Endothelial cell of umbilical vein (primary cell): ENCODE measurements at regions of chr4 and their contacts with region 1.

Region 1: DNA sequence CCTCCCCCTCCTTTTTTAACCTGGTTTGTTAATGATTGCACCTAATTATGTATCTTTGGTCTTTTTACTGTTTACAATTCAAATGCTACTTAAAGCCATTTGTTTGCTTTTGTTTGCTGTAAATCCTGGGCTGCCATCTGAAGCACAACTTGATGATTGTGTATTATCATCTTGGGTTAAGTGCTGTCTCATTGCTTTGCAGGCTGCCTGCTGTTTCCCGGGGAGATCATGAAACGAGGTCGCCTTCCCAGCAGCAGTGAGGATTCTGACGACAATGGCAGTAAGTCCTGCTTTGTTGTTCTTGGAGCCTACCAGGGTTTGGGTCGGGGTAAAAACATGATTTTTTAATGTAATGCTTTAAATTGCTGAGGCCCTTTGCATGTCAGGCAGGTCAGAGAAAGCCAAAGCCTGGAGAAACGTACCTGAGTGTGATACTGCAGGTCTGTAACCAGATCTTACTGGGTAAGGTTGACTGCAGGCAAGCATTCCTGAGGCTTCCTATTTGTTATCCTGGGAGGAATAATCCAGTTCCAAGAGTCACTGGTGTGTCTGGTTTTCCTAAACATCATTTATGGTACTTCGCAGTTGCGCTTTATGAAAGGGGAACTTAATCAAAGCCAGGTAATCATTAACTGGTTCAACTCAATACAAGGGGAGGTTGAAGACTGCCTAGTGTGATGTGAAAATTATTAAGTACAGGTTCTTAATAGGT is 22.2 kb downstream of the JADE1 start:
- DNase-seq: no peak
- H3K4me3 ChIP-seq: no peak overlapping the region
- H3K27ac ChIP-seq: no peak overlapping the region
- H3K4me1 ChIP-seq: peaks cover 14% of the 10 kb centered on the region
- H3K27me3 ChIP-seq: no peaks in the 10 kb centered on the region
- CTCF ChIP-seq: no peak
- POLR2A ChIP-seq: no peak

Region 2: DNA sequence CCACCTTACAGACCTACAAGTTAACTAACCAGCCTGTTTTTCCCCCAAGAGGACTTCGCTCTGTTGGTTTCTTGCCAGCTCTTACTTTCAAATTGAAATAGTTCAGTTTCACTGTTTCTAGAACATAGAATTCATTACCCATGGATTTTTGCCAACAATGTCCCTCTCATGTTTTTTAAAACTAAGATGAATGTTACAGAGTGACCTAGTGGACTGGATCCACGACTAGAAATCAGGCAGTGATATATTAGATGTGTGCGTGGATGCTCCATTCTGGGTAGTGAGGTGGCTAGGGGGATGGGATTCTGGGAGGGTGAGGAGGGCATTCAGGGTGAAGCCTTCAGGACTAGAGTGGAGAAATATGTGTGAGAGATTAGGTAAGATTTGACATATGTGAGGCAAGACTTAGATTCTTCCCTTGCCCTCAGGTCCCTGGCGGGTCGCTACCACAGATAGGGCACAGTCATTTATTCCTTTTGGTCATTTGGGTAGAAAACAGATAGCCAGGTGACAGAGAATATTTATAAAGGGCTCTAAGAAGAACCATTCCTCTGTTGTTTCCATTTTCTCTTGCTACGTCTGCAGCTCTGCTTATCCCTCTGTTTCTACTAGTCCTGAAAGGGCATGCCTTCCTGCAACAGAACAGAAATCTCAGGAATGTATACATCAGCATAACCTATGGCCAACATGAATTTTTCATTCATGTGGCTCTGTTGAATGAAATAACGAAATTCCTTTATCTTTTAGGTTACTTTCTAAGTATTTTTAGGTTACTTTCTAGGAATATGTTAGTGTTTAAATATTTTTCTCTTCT is 37.6 kb before region 1 on chr4:
- CTCF ChIA-PET with region 1: no interaction called
- POLR2A ChIA-PET with region 1: no interaction called
- dilution Hi-C with region 1: no loop called
- intact Hi-C with region 1: no loop called
- DNase-seq: no peak
- H3K4me3 ChIP-seq: no peak overlapping the region
- H3K27ac ChIP-seq: no peak overlapping the region
- H3K4me1 ChIP-seq: no peaks in the 10 kb centered on the region
- H3K27me3 ChIP-seq: no peaks in the 10 kb centered on the region
- CTCF ChIP-seq: no peak
- POLR2A ChIP-seq: no peak

Region 3: GRCh38 chr4:128854433-128854832 is 22.7 kb after region 1 on chr4:
- CTCF ChIA-PET with region 1: interaction called, 3 read pairs
- POLR2A ChIA-PET with region 1: no interaction called
- dilution Hi-C with region 1: no loop called
- intact Hi-C with region 1: loop called (anchors 1 kb)
- DNase-seq: peak; percentile 29
- H3K4me3 ChIP-seq: no peak overlapping the region
- H3K27ac ChIP-seq: no peak overlapping the region
- H3K4me1 ChIP-seq: no peaks in the 10 kb centered on the region
- H3K27me3 ChIP-seq: no peaks in the 10 kb centered on the region
- CTCF ChIP-seq: no peak
- POLR2A ChIP-seq: no peak